ENCODE measurements at regions of chr17 and their contacts with region 1.

Region 1: GRCh38 chr17:46071796-46072195 is 72.7 kb downstream of the STH start:
- DNase-seq: no peak

Region 2: DNA sequence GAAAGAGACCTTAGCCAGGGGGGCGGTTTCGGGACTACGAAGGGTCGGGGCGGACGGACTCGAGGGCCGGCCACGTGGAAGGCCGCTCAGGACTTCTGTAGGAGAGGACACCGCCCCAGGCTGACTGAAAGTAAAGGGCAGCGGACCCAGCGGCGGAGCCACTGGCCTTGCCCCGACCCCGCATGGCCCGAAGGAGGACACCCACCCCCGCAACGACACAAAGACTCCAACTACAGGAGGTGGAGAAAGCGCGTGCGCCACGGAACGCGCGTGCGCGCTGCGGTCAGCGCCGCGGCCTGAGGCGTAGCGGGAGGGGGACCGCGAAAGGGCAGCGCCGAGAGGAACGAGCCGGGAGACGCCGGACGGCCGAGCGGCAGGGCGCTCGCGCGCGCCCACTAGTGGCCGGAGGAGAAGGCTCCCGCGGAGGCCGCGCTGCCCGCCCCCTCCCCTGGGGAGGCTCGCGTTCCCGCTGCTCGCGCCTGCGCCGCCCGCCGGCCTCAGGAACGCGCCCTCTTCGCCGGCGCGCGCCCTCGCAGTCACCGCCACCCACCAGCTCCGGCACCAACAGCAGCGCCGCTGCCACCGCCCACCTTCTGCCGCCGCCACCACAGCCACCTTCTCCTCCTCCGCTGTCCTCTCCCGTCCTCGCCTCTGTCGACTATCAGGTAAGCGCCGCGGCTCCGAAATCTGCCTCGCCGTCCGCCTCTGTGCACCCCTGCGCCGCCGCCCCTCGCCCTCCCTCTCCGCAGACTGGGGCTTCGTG is 177.6 kb before region 1 on chr17 and contains the start of gene MAPT:
- intact Hi-C with region 1: no loop called
- DNase-seq: peak; percentile 97
- total RNA-seq, gene MAPT: 4.4 to 5.7 TPM

Region 3: GRCh38 chr17:46020023-46020761 is 51.6 kb before region 1 on chr17:
- intact Hi-C with region 1: loop called in 1 of 2 experiments (anchors 2 kb)
- DNase-seq: no peak